CD8-positive, alpha-beta T cell (primary cell): ENCODE measurements at regions of chr2 and their contacts with region 1.

Region 1: GRCh38 chr2:235595422-235596010 is 101.7 kb downstream of the AGAP1 start:
- DNase-seq: peak in 7 of 9 experiments; percentile 5 to 57 (median 25)
- ATAC-seq: no peak
- H3K4me3 ChIP-seq: no peak overlapping the region
- H3K4me3 Mint-ChIP-seq: no peak overlapping the region
- H3K27ac ChIP-seq: no peak overlapping the region
- H3K27ac Mint-ChIP-seq: no peak overlapping the region
- H3K4me1 ChIP-seq: no peaks in the 10 kb centered on the region
- H3K4me1 Mint-ChIP-seq: no peaks in the 10 kb centered on the region
- H3K27me3 ChIP-seq: no peaks in the 10 kb centered on the region
- H3K27me3 Mint-ChIP-seq: no peaks in the 10 kb centered on the region
- CTCF ChIP-seq: no peak

Region 2: GRCh38 chr2:234550511-234551107 is 1044.9 kb before region 1 on chr2:
- CTCF ChIA-PET with region 1: no interaction called
- POLR2A ChIA-PET with region 1: no interaction called
- intact Hi-C with region 1: loop called in 1 of 2 experiments (anchors 1 kb)
- DNase-seq: peak; percentile 18 to 78 (median 53)
- ATAC-seq: peak; percentile 64
- H3K4me3 ChIP-seq: no peak overlapping the region
- H3K4me3 Mint-ChIP-seq: no peak overlapping the region
- H3K27ac ChIP-seq: no peak overlapping the region
- H3K27ac Mint-ChIP-seq: no peak overlapping the region
- H3K4me1 ChIP-seq: no peaks in the 10 kb centered on the region
- H3K4me1 Mint-ChIP-seq: peaks cover 1% of the 10 kb centered on the region
- H3K27me3 ChIP-seq: no peaks in the 10 kb centered on the region
- H3K27me3 Mint-ChIP-seq: peaks cover 22% of the 10 kb centered on the region
- CTCF ChIP-seq: peak; percentile 97

Region 3: GRCh38 chr2:235135990-235136561 is 459.4 kb before region 1 on chr2:
- CTCF ChIA-PET with region 1: interaction called, 10 read pairs
- POLR2A ChIA-PET with region 1: no interaction called
- intact Hi-C with region 1: loop called in 1 of 2 experiments (anchors 2 kb)
- DNase-seq: peak in 8 of 9 experiments; percentile 25 to 65 (median 50)
- ATAC-seq: no peak
- H3K4me3 ChIP-seq: no peak overlapping the region
- H3K4me3 Mint-ChIP-seq: no peak overlapping the region
- H3K27ac ChIP-seq: no peak overlapping the region
- H3K27ac Mint-ChIP-seq: no peak overlapping the region
- H3K4me1 ChIP-seq: no peaks in the 10 kb centered on the region
- H3K4me1 Mint-ChIP-seq: no peaks in the 10 kb centered on the region
- H3K27me3 ChIP-seq: no peaks in the 10 kb centered on the region
- H3K27me3 Mint-ChIP-seq: peaks cover 37% of the 10 kb centered on the region
- CTCF ChIP-seq: peak; percentile 33

Region 4: GRCh38 chr2:235406430-235406829 is 189.1 kb before region 1 on chr2:
- CTCF ChIA-PET with region 1: no interaction called
- POLR2A ChIA-PET with region 1: no interaction called
- intact Hi-C with region 1: no loop called
- DNase-seq: no peak
- ATAC-seq: no peak
- H3K4me3 ChIP-seq: no peak overlapping the region
- H3K4me3 Mint-ChIP-seq: no peak overlapping the region
- H3K27ac ChIP-seq: no peak overlapping the region
- H3K27ac Mint-ChIP-seq: no peak overlapping the region
- H3K4me1 ChIP-seq: no peaks in the 10 kb centered on the region
- H3K4me1 Mint-ChIP-seq: no peaks in the 10 kb centered on the region
- H3K27me3 ChIP-seq: peaks cover 0 to 2% of the 10 kb centered on the region in 2 experiments
- H3K27me3 Mint-ChIP-seq: peaks cover 8% of the 10 kb centered on the region
- CTCF ChIP-seq: no peak

Region 5: GRCh38 chr2:235500761-235501672 is 94.5 kb before region 1 on chr2:
- CTCF ChIA-PET with region 1: no interaction called
- POLR2A ChIA-PET with region 1: no interaction called
- intact Hi-C with region 1: no loop called
- DNase-seq: peak in 1 of 9 experiments; percentile 13
- ATAC-seq: no peak
- H3K4me3 ChIP-seq: no peak overlapping the region
- H3K4me3 Mint-ChIP-seq: peak overlapping the region; percentile 11
- H3K27ac ChIP-seq: no peak overlapping the region
- H3K27ac Mint-ChIP-seq: no peak overlapping the region
- H3K4me1 ChIP-seq: no peaks in the 10 kb centered on the region
- H3K4me1 Mint-ChIP-seq: peaks cover 17% of the 10 kb centered on the region
- H3K27me3 ChIP-seq: peaks cover 0 to 3% of the 10 kb centered on the region in 2 experiments
- H3K27me3 Mint-ChIP-seq: peaks cover 51% of the 10 kb centered on the region
- CTCF ChIP-seq: no peak

Region 6: DNA sequence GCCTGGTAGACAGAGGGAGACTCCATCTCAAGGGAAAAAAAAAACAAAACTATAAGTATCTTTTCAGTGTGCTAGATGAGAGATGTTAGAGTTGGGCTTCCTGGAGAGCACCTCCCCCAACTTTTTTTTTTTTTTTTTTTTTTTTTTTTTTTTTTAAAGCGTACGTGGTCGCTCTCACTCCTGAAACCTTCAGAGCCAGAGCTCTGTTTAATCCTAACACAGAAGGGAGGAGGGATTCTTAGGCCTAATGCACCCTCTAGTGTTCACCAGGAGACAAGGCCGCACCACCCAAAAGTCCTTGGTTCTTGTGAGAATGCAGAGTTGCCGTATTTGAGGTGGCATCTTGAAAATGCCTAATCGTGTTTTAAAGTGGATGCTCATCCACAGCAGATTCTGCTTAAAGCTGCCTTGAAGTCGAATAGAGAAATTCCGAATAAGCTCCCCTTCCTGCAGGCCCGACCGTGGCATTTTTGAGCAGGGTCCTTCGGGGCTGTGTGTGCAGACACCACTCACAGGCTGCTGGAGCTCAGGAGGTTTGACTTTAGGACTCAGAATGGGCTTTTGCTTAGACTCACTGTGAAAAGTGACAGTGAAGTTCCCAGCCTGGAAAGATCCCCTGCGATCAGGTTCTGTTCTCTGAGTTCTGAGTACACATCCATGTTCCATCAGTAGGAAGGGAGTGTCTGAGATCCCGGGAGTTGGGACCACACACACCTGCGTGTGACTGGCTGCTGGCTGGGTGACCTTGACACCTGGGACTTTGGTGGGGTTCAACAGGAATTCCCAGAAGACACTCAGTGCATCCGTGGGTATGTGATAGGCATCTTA is 151.0 kb after region 1 on chr2:
- CTCF ChIA-PET with region 1: interaction called, 5 read pairs
- POLR2A ChIA-PET with region 1: no interaction called
- intact Hi-C with region 1: loop called (anchors 2 to 10 kb)
- DNase-seq: peak in 6 of 9 experiments; percentile 13 to 76 (median 34)
- ATAC-seq: no peak
- H3K4me3 ChIP-seq: no peak overlapping the region
- H3K4me3 Mint-ChIP-seq: no peak overlapping the region
- H3K27ac ChIP-seq: no peak overlapping the region
- H3K27ac Mint-ChIP-seq: no peak overlapping the region
- H3K4me1 ChIP-seq: no peaks in the 10 kb centered on the region
- H3K4me1 Mint-ChIP-seq: no peaks in the 10 kb centered on the region
- H3K27me3 ChIP-seq: no peaks in the 10 kb centered on the region
- H3K27me3 Mint-ChIP-seq: peaks cover 16% of the 10 kb centered on the region
- CTCF ChIP-seq: peak; percentile 48